ENCODE measurements at regions of chr15 and their contacts with region 1.

Region 1: DNA sequence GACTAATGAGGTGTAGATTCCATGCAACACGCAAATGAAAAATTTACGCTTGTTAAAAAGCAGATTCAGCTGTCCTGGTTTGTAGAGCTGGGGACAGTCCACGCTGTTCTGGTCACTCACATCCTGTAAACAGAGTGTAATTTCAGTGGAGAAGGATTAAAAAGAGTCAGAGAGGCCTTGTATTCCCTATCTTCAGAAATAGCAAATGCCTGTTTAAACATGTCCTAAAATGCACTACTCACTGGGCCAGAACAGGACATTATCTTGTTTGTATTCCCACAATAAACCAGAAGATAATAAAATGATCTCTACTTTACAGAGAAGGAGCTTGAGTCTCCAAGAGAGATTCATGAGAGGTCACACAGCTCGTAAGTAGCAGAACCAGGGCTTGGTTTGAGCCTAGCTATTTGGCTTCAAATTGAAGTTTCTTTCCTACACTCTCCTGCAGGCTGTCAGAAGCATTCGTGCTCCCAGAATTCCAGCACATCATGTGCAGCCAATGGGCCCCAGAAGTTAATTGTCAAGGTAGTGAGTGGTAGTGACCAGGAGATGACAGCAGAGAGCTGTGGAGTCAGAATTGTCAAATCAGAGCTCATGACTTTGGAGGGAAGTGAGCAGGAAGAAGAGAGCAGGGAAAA is 242.5 kb downstream of the ATP8B4 start:
- DNase-seq: no peak
- H3K4me3 Mint-ChIP-seq: no peak overlapping the region
- H3K27ac Mint-ChIP-seq: no peak overlapping the region
- H3K4me1 Mint-ChIP-seq: no peaks in the 10 kb centered on the region
- H3K27me3 Mint-ChIP-seq: no peaks in the 10 kb centered on the region

Region 2: GRCh38 chr15:49215768-49216739 is 660.5 kb before region 1 on chr15:
- CTCF ChIA-PET with region 1: no interaction called
- intact Hi-C with region 1: no loop called
- DNase-seq: no peak
- H3K4me3 Mint-ChIP-seq: no peak overlapping the region
- H3K27ac Mint-ChIP-seq: no peak overlapping the region
- H3K4me1 Mint-ChIP-seq: peaks cover 10% of the 10 kb centered on the region
- H3K27me3 Mint-ChIP-seq: no peaks in the 10 kb centered on the region

Region 3: GRCh38 chr15:49887659-49888322 is 11.3 kb after region 1 on chr15:
- CTCF ChIA-PET with region 1: no interaction called
- intact Hi-C with region 1: no loop called
- DNase-seq: no peak
- H3K4me3 Mint-ChIP-seq: no peak overlapping the region
- H3K27ac Mint-ChIP-seq: no peak overlapping the region
- H3K4me1 Mint-ChIP-seq: no peaks in the 10 kb centered on the region
- H3K27me3 Mint-ChIP-seq: no peaks in the 10 kb centered on the region

Region 4: DNA sequence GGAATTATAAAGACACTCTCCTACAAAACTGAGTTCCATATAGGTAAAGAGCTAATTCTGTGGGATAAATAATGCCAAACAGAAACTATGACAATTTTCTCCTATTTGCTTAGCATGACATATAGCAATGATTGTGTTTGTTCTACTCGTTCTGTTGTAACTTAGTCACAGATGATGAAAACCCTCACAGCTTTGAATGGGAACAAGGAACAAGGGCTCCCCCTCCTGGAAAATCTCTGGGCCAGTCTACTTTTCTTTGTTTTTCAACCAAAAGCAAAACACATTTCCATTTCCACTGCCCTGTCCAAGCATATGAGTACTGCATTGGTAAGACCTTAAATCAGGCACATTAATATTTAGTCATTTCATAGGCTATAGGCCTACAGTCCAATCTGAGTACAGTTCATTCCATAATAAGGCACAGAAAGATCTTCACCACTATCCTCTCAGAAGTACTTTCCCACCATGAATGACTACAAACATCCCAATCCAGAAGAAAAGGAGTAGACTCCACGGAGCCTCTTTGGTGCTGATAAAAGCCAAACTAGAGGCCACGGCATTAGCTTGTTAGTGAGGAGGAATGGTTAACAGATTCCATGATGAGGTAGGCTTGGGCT is 175.4 kb after region 1 on chr15:
- CTCF ChIA-PET with region 1: no interaction called
- intact Hi-C with region 1: loop called (anchors 1 kb)
- DNase-seq: peak; percentile 58
- H3K4me3 Mint-ChIP-seq: no peak overlapping the region
- H3K27ac Mint-ChIP-seq: no peak overlapping the region
- H3K4me1 Mint-ChIP-seq: peaks cover 2% of the 10 kb centered on the region
- H3K27me3 Mint-ChIP-seq: peaks cover 15% of the 10 kb centered on the region

Region 5: DNA sequence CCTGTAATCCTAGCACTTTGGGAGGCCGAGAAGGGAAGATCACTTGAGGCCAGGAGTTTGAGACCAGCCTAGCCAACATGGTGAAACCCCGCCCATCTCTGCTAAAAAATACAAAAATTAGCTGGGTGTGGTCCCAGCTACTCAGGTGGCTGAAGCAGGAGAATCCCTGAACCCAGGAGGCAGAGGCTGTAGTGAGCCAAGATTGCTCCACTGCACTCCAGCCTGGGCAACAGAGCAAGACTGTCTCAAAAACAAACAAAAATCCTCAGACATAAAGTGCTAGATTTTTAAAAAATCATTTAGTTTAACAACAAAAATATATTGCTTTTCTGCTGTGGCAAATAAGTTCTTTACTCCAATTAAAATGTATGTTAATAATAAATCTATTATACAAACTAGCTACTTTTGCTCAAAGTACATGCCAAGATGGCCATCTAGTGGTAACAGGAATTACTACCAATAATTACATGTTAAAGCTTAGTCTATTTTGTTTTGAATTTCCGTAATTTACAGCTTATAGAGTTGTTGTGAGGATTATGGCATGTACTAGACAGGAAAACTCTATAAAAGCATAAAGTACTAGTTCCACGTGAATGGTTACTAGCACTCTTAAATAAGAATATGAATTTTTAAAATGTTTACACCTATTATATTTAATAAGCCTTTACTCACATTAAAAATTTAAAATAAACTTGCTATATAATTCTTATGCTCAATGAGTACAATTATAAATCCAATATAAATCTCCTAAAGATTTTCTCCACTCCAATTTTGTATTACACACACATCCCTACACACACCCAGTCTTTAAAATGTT is 439.5 kb after region 1 on chr15:
- CTCF ChIA-PET with region 1: interaction called, 3 read pairs
- intact Hi-C with region 1: loop called (anchors 2 kb)
- DNase-seq: no peak
- H3K4me3 Mint-ChIP-seq: no peak overlapping the region
- H3K27ac Mint-ChIP-seq: no peak overlapping the region
- H3K4me1 Mint-ChIP-seq: peaks cover 25% of the 10 kb centered on the region
- H3K27me3 Mint-ChIP-seq: no peaks in the 10 kb centered on the region